ENCODE measurements at regions of chr20 and their contacts with region 1.

Region 1: DNA sequence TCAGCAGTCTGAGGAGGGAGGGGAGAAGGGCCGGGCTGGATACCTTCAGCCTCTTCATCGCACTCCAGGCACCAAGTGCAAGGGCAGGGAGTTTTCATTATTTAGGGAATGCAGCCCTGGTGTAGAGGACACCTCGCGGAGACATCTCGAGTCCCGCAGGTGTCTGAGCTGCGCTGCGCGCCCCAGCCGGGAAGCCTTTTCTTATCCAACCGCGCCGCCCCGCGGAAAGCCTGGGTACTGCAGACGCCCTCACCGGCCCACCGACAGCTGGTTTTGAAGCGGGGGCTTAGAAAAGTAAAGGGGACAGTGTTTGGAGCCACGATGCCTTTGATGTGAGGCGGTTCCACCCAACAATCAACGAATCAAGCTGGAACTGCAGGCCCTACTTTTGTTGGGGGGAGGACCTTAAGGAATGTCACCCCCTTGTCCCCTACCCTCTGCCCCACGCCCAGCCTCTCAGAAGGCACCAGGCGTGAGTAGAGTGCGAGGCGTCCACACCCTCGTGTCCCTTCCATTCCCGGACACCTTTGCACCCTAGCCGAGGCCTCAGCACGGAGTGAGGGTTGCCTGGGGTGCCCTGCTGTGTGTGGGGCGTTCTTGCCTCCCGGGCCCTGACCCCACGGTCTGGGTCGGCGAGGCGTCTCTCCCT is 8.6 kb downstream of the NKX2-2 start:
- DNase-seq: peak; percentile 66 to 77 (median 70)
- H3K4me3 ChIP-seq: peak overlapping the region in 1 of 2 donors; percentile 55
- H3K4me3 Mint-ChIP-seq: peak overlapping the region; percentile 71 to 80 (median 74)
- H3K27ac ChIP-seq: no peak overlapping the region
- H3K27ac Mint-ChIP-seq: peak overlapping the region in 2 of 7 donors; percentile 41 to 81
- H3K4me1 ChIP-seq: peaks cover 22% of the 10 kb centered on the region
- H3K4me1 Mint-ChIP-seq: peaks cover 15 to 43% (median 35%) of the 10 kb centered on the region in 4 donors
- H3K27me3 ChIP-seq: peaks cover 39% of the 10 kb centered on the region
- H3K27me3 Mint-ChIP-seq: peaks cover 44 to 52% of the 10 kb centered on the region in 2 donors

Region 2: GRCh38 chr20:19692685-19693119 is 1812.6 kb before region 1 on chr20:
- CTCF ChIA-PET with region 1: no interaction called
- POLR2A ChIA-PET with region 1: no interaction called
- intact Hi-C with region 1: loop called (anchors 5 kb)
- DNase-seq: peak in 4 of 5 donors; percentile 10 to 15 (median 12)
- H3K4me3 ChIP-seq: no peak overlapping the region
- H3K4me3 Mint-ChIP-seq: peak overlapping the region in 1 of 8 donors; percentile 15
- H3K27ac ChIP-seq: no peak overlapping the region
- H3K27ac Mint-ChIP-seq: no peak overlapping the region
- H3K4me1 ChIP-seq: no peaks in the 10 kb centered on the region
- H3K4me1 Mint-ChIP-seq: peaks cover 0 to 5% (median 2%) of the 10 kb centered on the region in 4 donors
- H3K27me3 ChIP-seq: no peaks in the 10 kb centered on the region
- H3K27me3 Mint-ChIP-seq: peaks cover 6 to 18% of the 10 kb centered on the region in 2 donors

Region 3: DNA sequence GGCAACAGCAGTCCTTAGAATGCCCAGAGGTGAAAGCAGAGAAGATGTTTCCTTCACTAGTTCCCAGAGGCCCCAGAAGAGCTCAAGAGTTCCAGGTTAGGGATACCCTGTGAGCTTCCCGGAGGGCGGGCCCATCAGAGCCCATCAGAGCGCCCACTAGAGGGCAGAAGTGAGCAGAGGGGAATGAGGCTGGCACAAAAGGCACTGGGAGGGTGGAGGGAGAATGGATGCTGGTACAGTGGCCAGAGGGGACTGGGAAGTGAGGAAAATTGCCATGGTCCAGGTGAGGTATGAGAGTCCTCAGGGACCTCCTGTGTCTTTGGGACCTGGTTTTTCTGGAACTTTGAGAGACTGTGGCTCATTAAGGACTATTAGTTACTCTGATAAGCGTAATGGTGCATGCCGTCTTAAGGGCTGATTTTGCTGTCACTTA is 456.4 kb before region 1 on chr20:
- CTCF ChIA-PET with region 1: interaction called, 35 read pairs
- POLR2A ChIA-PET with region 1: no interaction called
- intact Hi-C with region 1: loop called (anchors 1 kb)
- DNase-seq: peak; percentile 5 to 39 (median 23)
- H3K4me3 ChIP-seq: no peak overlapping the region
- H3K4me3 Mint-ChIP-seq: no peak overlapping the region
- H3K27ac ChIP-seq: no peak overlapping the region
- H3K27ac Mint-ChIP-seq: no peak overlapping the region
- H3K4me1 ChIP-seq: no peaks in the 10 kb centered on the region
- H3K4me1 Mint-ChIP-seq: no peaks in the 10 kb centered on the region
- H3K27me3 ChIP-seq: no peaks in the 10 kb centered on the region
- H3K27me3 Mint-ChIP-seq: peaks cover 17 to 36% of the 10 kb centered on the region in 2 donors

Region 4: GRCh38 chr20:21228511-21228910 is 276.8 kb before region 1 on chr20:
- CTCF ChIA-PET with region 1: interaction called, 16 read pairs
- POLR2A ChIA-PET with region 1: no interaction called
- intact Hi-C with region 1: no loop called
- DNase-seq: no peak
- H3K4me3 ChIP-seq: no peak overlapping the region
- H3K4me3 Mint-ChIP-seq: no peak overlapping the region
- H3K27ac ChIP-seq: no peak overlapping the region
- H3K27ac Mint-ChIP-seq: peak overlapping the region in 1 of 7 donors; percentile 42
- H3K4me1 ChIP-seq: no peaks in the 10 kb centered on the region
- H3K4me1 Mint-ChIP-seq: no peaks in the 10 kb centered on the region
- H3K27me3 ChIP-seq: no peaks in the 10 kb centered on the region
- H3K27me3 Mint-ChIP-seq: no peaks in the 10 kb centered on the region

Region 5: GRCh38 chr20:21395666-21396598 is 109.4 kb before region 1 on chr20:
- CTCF ChIA-PET with region 1: no interaction called
- POLR2A ChIA-PET with region 1: no interaction called
- intact Hi-C with region 1: loop called (anchors 5 kb)
- DNase-seq: peak; percentile 54 to 74 (median 56)
- H3K4me3 ChIP-seq: no peak overlapping the region
- H3K4me3 Mint-ChIP-seq: peak overlapping the region in 7 of 8 donors; percentile 71 to 89 (median 79)
- H3K27ac ChIP-seq: no peak overlapping the region
- H3K27ac Mint-ChIP-seq: peak overlapping the region in 5 of 7 donors; percentile 6 to 88 (median 18)
- H3K4me1 ChIP-seq: peaks cover 20% of the 10 kb centered on the region
- H3K4me1 Mint-ChIP-seq: peaks cover 13 to 25% (median 16%) of the 10 kb centered on the region in 4 donors
- H3K27me3 ChIP-seq: peaks cover 76% of the 10 kb centered on the region
- H3K27me3 Mint-ChIP-seq: peaks cover 49 to 67% of the 10 kb centered on the region in 2 donors

Region 6: DNA sequence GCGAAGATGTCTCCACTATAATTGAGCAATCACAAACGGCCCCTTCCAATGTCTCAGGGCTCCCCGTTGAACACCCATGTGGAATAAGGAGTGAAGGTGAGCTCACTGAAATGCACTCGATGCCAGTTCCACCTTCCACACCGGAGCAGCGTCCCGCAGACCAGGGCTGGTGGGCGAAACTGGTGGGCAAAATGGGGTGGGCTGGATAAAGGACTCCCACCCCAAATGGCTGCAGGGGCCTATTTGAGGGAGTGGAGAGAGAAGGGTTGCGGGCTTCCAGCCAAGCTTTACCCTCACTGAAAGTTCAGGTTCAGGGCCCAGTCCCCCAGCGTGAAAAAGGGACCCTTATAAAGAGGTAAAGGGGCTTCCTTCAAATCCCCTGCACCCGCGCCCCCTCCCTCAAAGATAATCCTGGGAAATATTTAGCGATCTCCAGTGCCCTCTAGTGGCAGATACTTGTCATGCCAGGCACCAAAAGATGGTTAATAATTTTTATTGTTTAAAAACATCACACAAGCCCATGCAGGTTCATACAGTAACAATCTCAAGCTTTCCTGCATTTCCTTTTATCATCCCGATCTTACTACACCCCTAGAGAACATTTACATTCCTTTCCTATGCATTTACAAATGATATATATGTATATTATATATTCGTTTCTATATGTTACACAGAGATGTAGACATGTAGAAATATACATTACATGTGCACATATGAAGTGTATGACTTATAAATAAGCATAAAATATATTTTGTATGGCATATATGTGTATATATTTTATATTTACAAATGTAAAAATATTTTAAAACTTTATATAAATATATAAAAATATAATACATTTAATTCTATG is 66.8 kb after region 1 on chr20:
- CTCF ChIA-PET with region 1: interaction called, 36 read pairs
- POLR2A ChIA-PET with region 1: no interaction called
- intact Hi-C with region 1: loop called (anchors 1 kb)
- DNase-seq: peak in 2 of 5 donors; percentile 15 to 26
- H3K4me3 ChIP-seq: no peak overlapping the region
- H3K4me3 Mint-ChIP-seq: no peak overlapping the region
- H3K27ac ChIP-seq: no peak overlapping the region
- H3K27ac Mint-ChIP-seq: no peak overlapping the region
- H3K4me1 ChIP-seq: peaks cover 15% of the 10 kb centered on the region
- H3K4me1 Mint-ChIP-seq: peaks cover 2 to 13% (median 8%) of the 10 kb centered on the region in 4 donors
- H3K27me3 ChIP-seq: no peaks in the 10 kb centered on the region
- H3K27me3 Mint-ChIP-seq: peaks cover 1 to 10% of the 10 kb centered on the region in 2 donors